ENCODE measurements at regions of chr17 and their contacts with region 1.

Region 1: GRCh38 chr17:7989781-7990655 is 12.4 kb upstream of the GUCY2D start:
- DNase-seq: no peak
- H3K4me3 ChIP-seq: peak overlapping the region; percentile 66
- CTCF ChIP-seq: peak; percentile 97

Region 2: DNA sequence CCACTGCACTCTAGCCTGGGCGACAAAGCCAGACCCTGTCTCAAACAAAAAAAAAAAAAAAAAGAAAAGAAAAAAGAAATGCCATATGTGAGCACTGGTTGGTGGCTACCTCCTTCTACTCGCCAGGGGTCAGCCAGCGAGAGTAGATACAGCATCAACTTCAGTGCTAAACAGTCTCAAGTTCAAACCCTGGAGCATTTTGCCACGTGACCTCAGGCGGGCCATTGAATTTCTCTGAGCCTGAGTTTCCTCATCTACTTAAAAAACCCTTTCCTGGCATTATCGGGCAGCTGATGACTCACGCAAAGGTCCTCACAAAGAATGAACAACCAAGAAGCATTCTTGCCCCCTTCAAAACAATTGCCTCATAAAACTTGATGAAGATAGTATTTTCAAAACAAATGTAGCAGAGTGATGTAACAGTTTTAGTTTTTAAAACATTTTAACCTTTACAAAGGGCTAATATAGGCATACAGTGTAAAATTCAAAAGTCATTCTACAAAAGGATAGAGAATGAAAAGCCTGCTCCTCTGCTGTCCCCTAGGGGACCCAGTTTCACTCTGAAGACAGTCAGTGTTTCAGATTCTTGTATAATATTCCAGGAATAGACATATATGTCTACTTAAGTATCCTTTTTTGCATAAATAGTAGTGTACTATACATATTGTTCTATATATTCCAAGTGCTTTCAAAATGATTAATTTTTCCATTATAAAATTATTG is 244.1 kb before region 1 on chr17:
- CTCF ChIA-PET with region 1: interaction called, 43 read pairs
- POLR2A ChIA-PET with region 1: no interaction called
- DNase-seq: peak; percentile 23
- H3K4me3 ChIP-seq: no peak overlapping the region
- CTCF ChIP-seq: no peak

Region 3: DNA sequence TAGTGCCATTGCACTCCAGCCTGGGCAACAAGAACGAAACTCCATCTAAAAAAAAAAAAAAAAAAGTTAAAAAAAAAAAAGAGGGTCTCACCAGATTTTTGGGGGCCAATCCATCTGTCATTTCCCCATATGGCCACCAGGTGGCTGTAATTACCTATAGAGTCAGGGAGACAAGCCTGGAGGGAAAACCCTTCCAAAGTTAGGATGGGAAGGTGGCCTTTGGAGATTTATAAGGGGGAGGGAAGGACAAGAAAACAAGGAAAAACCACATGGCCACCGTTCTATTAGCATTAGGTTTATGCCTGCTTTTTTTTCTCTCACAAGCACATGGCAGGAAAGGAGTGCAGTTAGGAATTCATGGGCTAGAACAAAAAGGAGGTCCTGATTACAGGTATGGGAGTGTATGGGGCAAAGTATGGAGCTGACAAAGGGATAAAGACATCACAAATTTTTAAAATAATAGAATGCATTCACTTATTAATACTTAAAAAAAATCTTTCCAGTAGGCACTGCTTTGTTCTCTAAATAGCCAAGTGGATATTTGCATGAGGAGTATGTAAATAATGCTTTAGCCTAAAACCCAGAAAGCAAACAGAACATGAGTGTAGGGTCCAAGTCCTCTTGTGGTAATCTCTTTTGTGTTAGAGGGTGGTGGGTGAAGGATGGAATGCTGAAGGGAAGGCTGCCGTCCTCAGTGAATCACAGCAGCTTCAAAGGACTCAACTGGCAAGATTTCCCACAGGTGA is 127.2 kb before region 1 on chr17:
- CTCF ChIA-PET with region 1: interaction called, 233 read pairs
- POLR2A ChIA-PET with region 1: no interaction called
- DNase-seq: no peak
- H3K4me3 ChIP-seq: no peak overlapping the region
- CTCF ChIP-seq: peak; percentile 59

Region 4: GRCh38 chr17:7931709-7932482 is 58.1 kb before region 1 on chr17 and contains the starts of genes CNTROB and TRAPPC1:
- CTCF ChIA-PET with region 1: interaction called, 173 read pairs
- POLR2A ChIA-PET with region 1: interaction called, 5 read pairs
- DNase-seq: peak; percentile 92
- H3K4me3 ChIP-seq: peak within 1 kb of the TSS; percentile 100
- CTCF ChIP-seq: no peak

Region 5: GRCh38 chr17:7972131-7972785 is 17.8 kb before region 1 on chr17:
- CTCF ChIA-PET with region 1: interaction called, 33 read pairs
- POLR2A ChIA-PET with region 1: no interaction called
- DNase-seq: no peak
- H3K4me3 ChIP-seq: no peak overlapping the region
- CTCF ChIP-seq: no peak

Region 6: GRCh38 chr17:8041249-8041928 is 51.4 kb after region 1 on chr17:
- CTCF ChIA-PET with region 1: interaction called, 75 read pairs
- POLR2A ChIA-PET with region 1: interaction called, 3 read pairs
- DNase-seq: no peak
- H3K4me3 ChIP-seq: no peak overlapping the region
- CTCF ChIP-seq: peak; percentile 33

Measured in AG04449 (cell line).